ENCODE measurements at regions of chr4 and their contacts with region 1.

Region 1: GRCh38 chr4:83074086-83074704 is 39.2 kb downstream of the COPS4 start:
- DNase-seq: peak in 8 of 9 donors; percentile 49 to 91 (median 85)
- ATAC-seq: peak; percentile 99
- H3K4me3 ChIP-seq: no peak overlapping the region
- H3K4me3 Mint-ChIP-seq: peak overlapping the region; percentile 43 to 85 (median 76)
- H3K27ac ChIP-seq: no peak overlapping the region
- H3K27ac Mint-ChIP-seq: peak overlapping the region; percentile 19 to 87 (median 79)
- H3K4me1 ChIP-seq: peaks cover 0 to 6% of the 10 kb centered on the region in 2 donors
- H3K4me1 Mint-ChIP-seq: peaks cover 8 to 28% (median 14%) of the 10 kb centered on the region in 7 donors
- H3K27me3 ChIP-seq: no peaks in the 10 kb centered on the region
- H3K27me3 Mint-ChIP-seq: no peaks in the 10 kb centered on the region

Region 2: GRCh38 chr4:83054928-83055327 is 19.3 kb before region 1 on chr4:
- CTCF ChIA-PET with region 1: interaction called, 3 read pairs
- POLR2A ChIA-PET with region 1: no interaction called
- intact Hi-C with region 1: loop called in 1 of 2 experiments (anchors 1 kb)
- DNase-seq: peak in 6 of 9 donors; percentile 12 to 40 (median 30)
- ATAC-seq: no peak
- H3K4me3 ChIP-seq: no peak overlapping the region
- H3K4me3 Mint-ChIP-seq: no peak overlapping the region
- H3K27ac ChIP-seq: no peak overlapping the region
- H3K27ac Mint-ChIP-seq: no peak overlapping the region
- H3K4me1 ChIP-seq: no peaks in the 10 kb centered on the region
- H3K4me1 Mint-ChIP-seq: peaks cover 0 to 9% (median 0%) of the 10 kb centered on the region in 7 donors
- H3K27me3 ChIP-seq: no peaks in the 10 kb centered on the region
- H3K27me3 Mint-ChIP-seq: no peaks in the 10 kb centered on the region

Region 3: GRCh38 chr4:83212041-83212851 is 138.1 kb after region 1 on chr4:
- CTCF ChIA-PET with region 1: interaction called, 3 read pairs
- POLR2A ChIA-PET with region 1: interaction called, 5 read pairs
- intact Hi-C with region 1: loop called (anchors 1 kb)
- DNase-seq: peak in 7 of 9 donors; percentile 72 to 96 (median 90)
- ATAC-seq: peak; percentile 95
- H3K4me3 ChIP-seq: peak overlapping the region; percentile 38
- H3K4me3 Mint-ChIP-seq: peak overlapping the region; percentile 49 to 90 (median 68)
- H3K27ac ChIP-seq: peak overlapping the region; percentile 67
- H3K27ac Mint-ChIP-seq: peak overlapping the region; percentile 83 to 99 (median 92)
- H3K4me1 ChIP-seq: peaks cover 67 to 69% of the 10 kb centered on the region in 2 donors
- H3K4me1 Mint-ChIP-seq: peaks cover 55 to 84% (median 79%) of the 10 kb centered on the region in 7 donors
- H3K27me3 ChIP-seq: no peaks in the 10 kb centered on the region
- H3K27me3 Mint-ChIP-seq: peaks cover 0 to 17% (median 0%) of the 10 kb centered on the region in 5 donors

Region 4: DNA sequence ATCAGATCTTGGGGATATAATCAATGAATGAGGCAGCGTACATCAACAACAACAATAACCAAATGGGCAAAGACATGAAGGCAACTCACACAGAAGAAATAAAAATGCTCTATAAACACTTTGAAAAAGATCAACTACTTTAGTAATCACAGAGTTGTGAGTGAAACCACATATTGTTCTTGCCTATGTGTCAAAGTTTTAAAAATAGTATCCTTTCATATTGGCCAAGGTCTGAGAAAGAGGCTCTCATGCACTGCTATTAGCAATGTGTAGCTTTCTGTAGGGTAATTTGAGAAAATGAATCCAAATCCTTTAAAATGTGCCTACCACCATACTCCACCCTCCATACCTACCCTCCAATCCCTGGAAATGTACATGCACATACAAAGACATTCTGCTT is 185.4 kb after region 1 on chr4:
- CTCF ChIA-PET with region 1: interaction called, 42 read pairs
- POLR2A ChIA-PET with region 1: interaction called, 4 read pairs
- intact Hi-C with region 1: loop called (anchors 1 kb)
- DNase-seq: no peak
- ATAC-seq: no peak
- H3K4me3 ChIP-seq: no peak overlapping the region
- H3K4me3 Mint-ChIP-seq: no peak overlapping the region
- H3K27ac ChIP-seq: no peak overlapping the region
- H3K27ac Mint-ChIP-seq: no peak overlapping the region
- H3K4me1 ChIP-seq: peaks cover 4 to 5% of the 10 kb centered on the region in 2 donors
- H3K4me1 Mint-ChIP-seq: peaks cover 0 to 19% (median 9%) of the 10 kb centered on the region in 7 donors
- H3K27me3 ChIP-seq: no peaks in the 10 kb centered on the region
- H3K27me3 Mint-ChIP-seq: no peaks in the 10 kb centered on the region